ENCODE measurements at regions of chr10 and their contacts with region 1.

Region 1: DNA sequence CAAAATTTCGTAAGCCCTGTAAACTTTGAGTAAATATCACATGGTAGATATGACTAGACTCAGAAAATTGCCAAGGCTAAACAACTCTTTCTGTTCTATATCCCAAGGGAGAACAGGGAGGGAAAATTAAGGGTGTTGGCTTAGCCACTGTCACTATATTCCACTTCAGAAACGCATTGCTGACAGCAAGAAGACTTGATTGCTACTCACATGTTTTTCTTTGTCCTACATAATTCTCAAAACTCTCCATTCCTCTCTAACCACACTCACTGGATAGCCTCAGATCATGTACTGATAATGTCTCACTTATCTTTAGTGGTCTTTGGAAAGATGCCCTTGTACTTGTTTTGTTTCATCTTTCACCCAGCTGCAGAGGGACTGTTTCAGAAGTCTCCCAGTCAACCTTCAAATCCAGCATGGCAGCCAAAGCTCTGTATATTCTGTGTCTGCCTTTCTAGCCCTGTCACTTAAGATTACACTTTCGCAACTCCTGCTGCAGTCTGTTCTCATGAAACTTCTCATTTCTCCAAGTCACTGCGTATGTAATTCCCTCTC is 582.4 kb upstream of the FZD8 start:
- DNase-seq: no peak
- H3K4me3 ChIP-seq: no peak overlapping the region
- H3K27ac ChIP-seq: no peak overlapping the region
- H3K4me1 ChIP-seq: no peaks in the 10 kb centered on the region
- H3K27me3 ChIP-seq: no peaks in the 10 kb centered on the region
- CTCF ChIP-seq: no peak
- POLR2A ChIP-seq: no peak

Region 2: DNA sequence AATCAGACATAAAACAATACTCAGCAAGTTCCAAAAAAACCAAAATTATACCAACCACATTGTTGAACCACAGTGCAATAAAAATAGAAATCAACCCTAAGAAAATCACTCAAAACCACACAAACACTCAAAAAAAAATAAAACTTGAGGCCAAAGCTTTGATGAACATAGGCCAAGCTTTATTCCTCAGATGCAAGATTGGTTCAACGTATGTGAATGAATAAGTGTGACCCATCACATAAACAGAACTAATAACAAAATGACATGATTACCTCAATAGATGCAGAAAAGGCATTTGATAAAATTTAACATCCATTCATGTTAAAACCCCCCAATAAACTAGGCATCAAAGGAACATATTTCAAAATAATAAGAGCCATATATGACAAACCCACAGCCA is 76.3 kb before region 1 on chr10:
- intact Hi-C with region 1: loop called (anchors 2 kb)
- DNase-seq: no peak
- H3K4me3 ChIP-seq: no peak overlapping the region
- H3K27ac ChIP-seq: no peak overlapping the region
- H3K4me1 ChIP-seq: no peaks in the 10 kb centered on the region
- H3K27me3 ChIP-seq: no peaks in the 10 kb centered on the region
- CTCF ChIP-seq: no peak
- POLR2A ChIP-seq: no peak

Region 3: DNA sequence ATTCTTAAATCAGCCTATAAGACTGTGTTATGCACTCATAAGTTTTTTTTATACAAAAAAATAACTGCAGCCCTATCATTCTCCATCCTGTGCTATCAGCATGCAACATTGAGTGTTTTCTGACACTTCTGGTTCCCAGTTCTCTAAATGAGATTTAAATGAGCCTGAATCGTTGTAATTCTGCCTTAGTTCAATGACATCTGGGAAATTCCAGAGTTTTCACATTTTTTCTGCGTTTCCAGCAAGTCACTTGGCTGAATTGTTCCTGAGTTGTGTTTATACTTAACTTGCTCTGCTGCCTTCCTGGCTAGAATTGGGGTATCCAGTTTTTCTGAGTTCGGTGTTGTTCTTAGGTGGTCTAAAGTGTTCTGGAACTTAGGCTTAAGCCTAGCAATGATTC is 53.7 kb after region 1 on chr10:
- intact Hi-C with region 1: no loop called
- DNase-seq: no peak
- H3K4me3 ChIP-seq: no peak overlapping the region
- H3K27ac ChIP-seq: no peak overlapping the region
- H3K4me1 ChIP-seq: no peaks in the 10 kb centered on the region
- H3K27me3 ChIP-seq: no peaks in the 10 kb centered on the region
- CTCF ChIP-seq: no peak
- POLR2A ChIP-seq: no peak

Measured in breast epithelium (tissue), 4 donors.